ENCODE measurements at regions of chr5 and their contacts with region 1.

Region 1: GRCh38 chr5:39580702-39581453 is 156.1 kb upstream of the DAB2 start:
- H3K4me3 Mint-ChIP-seq: no peak overlapping the region
- H3K27ac Mint-ChIP-seq: no peak overlapping the region
- H3K4me1 Mint-ChIP-seq: peaks cover 25% of the 10 kb centered on the region
- H3K27me3 Mint-ChIP-seq: peaks cover 8% of the 10 kb centered on the region

Region 2: DNA sequence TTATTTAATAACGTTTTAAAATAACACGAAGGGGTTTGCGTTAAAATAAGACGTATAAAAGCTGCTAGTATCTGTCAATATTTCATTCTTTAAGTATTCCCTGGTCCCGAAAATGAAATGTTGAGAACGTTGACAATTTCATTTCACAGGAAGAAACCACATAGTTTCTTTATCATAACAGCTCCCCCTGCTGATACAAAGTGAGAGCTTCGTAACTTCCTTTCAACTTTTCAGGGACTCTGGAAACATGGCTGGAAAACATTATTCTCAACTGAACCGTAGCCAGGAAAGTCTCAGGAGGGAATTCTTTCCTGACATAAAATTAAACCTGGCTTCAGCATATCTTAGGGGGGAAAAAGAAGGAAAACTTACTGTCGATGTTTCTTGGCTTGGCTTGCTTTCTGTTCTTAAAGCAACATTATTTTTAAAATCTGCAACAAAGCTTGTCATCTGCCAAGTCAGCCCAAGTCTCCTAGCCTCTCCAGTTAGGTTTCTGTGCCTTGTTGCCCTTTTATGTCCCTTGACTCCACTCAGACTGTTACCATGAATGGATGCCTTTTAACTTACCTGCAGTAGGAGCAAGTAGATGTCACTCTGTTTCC is 33.2 kb before region 1 on chr5:
- intact Hi-C with region 1: no loop called
- H3K4me3 Mint-ChIP-seq: no peak overlapping the region
- H3K27ac Mint-ChIP-seq: no peak overlapping the region
- H3K4me1 Mint-ChIP-seq: peaks cover 7% of the 10 kb centered on the region
- H3K27me3 Mint-ChIP-seq: no peaks in the 10 kb centered on the region

Region 3: DNA sequence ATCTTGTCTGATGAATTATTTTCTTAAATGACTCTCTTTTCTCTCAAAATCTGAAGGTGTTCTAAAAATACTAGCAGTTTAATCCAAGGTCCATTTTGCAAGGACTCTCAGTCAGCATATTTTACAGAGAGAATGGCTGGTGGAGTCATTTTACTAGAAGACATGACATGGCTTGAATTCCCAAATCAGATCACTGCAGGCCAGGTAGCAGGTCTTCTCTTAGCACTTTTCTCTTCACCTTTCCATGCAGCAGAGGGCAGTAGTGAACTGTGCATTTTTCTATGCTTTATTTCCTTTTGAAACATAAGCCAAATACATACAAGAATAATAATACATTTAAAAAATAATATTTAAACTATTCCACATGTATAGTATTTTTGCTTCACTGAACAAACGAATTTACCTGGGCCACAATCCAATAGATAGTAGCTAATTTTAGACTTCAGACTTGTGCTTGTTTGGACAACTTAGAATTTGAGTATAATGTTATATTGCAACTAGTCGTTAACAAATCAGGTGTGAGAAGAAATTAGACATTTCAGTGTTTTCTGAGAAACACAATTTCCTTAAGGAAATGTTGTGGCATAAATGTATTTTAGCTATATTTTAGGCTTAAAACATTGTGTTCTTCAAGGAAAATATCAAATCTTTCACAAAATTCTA is 133.3 kb after region 1 on chr5:
- intact Hi-C with region 1: loop called (anchors 5 kb)
- H3K4me3 Mint-ChIP-seq: no peak overlapping the region
- H3K27ac Mint-ChIP-seq: no peak overlapping the region
- H3K4me1 Mint-ChIP-seq: peaks cover 4% of the 10 kb centered on the region
- H3K27me3 Mint-ChIP-seq: no peaks in the 10 kb centered on the region

Region 4: DNA sequence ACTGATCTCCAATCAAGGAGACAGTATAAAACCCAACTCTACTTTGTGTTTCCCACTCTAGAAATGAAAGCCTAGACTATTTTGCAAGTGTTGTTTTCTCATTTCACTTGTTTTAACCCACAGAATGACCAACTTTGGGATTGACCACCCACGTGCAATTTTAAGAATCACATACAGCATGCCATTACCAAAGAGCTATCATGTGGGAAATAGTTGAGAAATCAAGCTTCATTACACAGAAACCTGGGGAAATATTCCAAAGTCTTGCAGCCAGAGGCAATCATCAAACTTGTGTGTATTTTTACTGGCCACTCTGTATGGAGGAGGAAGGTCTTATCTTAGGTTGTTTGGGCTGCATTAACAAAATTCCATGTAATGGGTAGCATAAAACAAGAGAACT is 295.3 kb after region 1 on chr5:
- intact Hi-C with region 1: no loop called
- H3K4me3 Mint-ChIP-seq: no peak overlapping the region
- H3K27ac Mint-ChIP-seq: no peak overlapping the region
- H3K4me1 Mint-ChIP-seq: no peaks in the 10 kb centered on the region
- H3K27me3 Mint-ChIP-seq: no peaks in the 10 kb centered on the region

Region 5: DNA sequence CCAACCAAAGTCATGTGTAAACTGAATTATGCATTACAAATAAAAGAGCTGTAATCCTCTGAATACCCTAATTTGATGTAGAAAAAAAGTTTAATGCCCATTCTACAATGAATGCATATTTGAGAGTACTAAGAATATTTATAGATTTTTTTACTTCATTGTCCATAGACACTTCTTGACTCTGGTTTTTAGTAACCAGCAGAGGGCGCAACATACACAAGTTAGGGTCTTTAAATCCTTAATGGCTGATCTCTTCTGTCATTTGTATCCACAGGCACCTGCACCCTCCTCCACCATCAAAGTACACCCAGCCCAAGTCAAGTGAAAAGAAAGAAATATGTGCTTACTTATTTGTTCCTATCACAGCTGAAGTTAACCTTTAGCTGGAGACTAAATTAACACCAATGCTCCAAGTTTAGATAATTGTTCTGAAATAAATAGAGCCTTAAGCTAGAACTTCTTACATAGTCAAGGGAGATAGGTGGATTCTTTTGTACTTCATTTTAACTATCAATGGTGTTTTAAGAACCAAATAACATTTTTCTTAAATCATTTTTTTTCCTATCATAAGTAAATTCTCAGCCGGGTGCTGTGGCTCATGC is 368.1 kb after region 1 on chr5:
- intact Hi-C with region 1: loop called (anchors 5 kb)
- H3K4me3 Mint-ChIP-seq: no peak overlapping the region
- H3K27ac Mint-ChIP-seq: no peak overlapping the region
- H3K4me1 Mint-ChIP-seq: peaks cover 32% of the 10 kb centered on the region
- H3K27me3 Mint-ChIP-seq: no peaks in the 10 kb centered on the region

Region 6: GRCh38 chr5:40736103-40736875 is 1155.4 kb after region 1 on chr5:
- intact Hi-C with region 1: loop called (anchors 2 kb)
- H3K4me3 Mint-ChIP-seq: no peak overlapping the region
- H3K27ac Mint-ChIP-seq: no peak overlapping the region
- H3K4me1 Mint-ChIP-seq: peaks cover 20% of the 10 kb centered on the region
- H3K27me3 Mint-ChIP-seq: no peaks in the 10 kb centered on the region

Region 7: GRCh38 chr5:40879163-40879942 is 1298.5 kb after region 1 on chr5:
- intact Hi-C with region 1: loop called (anchors 2 kb)
- H3K4me3 Mint-ChIP-seq: no peak overlapping the region
- H3K27ac Mint-ChIP-seq: no peak overlapping the region
- H3K4me1 Mint-ChIP-seq: no peaks in the 10 kb centered on the region
- H3K27me3 Mint-ChIP-seq: no peaks in the 10 kb centered on the region